Activated T-helper 1 cell treated with anti-CD3 and anti-CD28 coated beads, Interleukin-12 subunit alpha, Interleukin-12 subunit beta, Interleukin-2, Interleukin-4 antibody, amounts not matched to agents 30 ng/mL and 10 ng/mL and 1 ng/mL, durations not matched to agents 14 hours and 24 hours and 36 hours (primary cell): ENCODE measurements at regions of chr15 and their contacts with region 1.

Region 1: DNA sequence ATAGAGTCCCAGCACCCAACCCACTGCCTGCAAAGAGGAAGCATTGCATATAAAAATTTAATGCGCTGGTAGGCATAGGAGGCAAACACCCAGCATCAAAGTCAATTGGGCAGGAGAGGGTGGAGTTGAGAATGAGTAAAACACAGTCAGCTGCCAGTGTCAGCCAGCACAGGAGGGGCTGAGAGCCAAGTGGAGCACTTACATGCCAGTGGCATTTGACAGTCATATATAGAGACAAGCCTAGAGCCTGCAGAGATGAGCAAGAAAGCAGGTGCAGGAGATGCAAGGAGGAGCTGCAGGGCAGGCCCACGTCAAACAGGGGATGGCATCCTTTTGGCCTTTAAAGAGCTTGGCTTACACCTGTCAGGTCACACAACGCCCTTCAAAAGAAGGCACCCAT is 27.6 kb upstream of the ZFAND6 start:
- DNase-seq: peak; percentile 16
- H3K4me3 Mint-ChIP-seq: no peak overlapping the region
- H3K27ac Mint-ChIP-seq: peak overlapping the region; percentile 85
- H3K4me1 Mint-ChIP-seq: peaks cover 42% of the 10 kb centered on the region
- H3K27me3 Mint-ChIP-seq: no peaks in the 10 kb centered on the region

Region 2: GRCh38 chr15:80072285-80072994 is 40.6 kb after region 1 on chr15:
- intact Hi-C with region 1: loop called (anchors 5 kb)
- DNase-seq: peak; percentile 14
- H3K4me3 Mint-ChIP-seq: peak overlapping the region; percentile 84
- H3K27ac Mint-ChIP-seq: no peak overlapping the region
- H3K4me1 Mint-ChIP-seq: peaks cover 45% of the 10 kb centered on the region
- H3K27me3 Mint-ChIP-seq: no peaks in the 10 kb centered on the region